ENCODE measurements at regions of chr15 and their contacts with region 1.

Region 1: DNA sequence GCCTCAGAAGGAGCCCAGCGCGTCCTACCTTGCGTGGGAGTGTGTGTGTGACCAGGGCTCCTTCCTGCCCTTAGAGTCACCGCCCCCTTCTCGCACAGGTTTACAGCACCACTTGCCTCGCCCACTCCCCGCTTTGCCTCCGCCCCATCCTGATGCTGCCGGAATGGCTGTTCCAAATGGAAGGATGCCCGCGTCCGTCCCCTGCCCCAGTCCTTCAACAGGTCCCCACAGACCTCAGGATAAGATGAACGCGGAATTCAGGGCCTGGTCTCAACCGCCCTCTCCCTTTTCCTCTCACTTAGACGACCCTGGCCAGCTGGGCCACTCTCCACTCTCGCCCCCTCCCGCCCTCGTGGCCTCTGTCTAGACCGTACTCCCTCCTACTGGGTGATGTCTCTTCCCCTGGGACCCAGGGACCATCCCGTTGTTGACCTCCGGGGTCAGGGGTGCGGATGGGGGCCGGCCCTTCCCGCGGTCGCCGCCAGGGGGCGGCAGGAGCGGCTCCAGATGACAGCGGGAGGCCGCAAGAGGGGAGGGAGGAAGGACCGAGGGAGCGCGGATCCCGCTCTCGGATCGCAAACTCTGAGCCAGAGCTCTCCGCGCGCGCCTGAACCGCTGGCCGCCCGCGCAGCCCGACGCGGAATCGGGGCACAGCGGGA is at the start of gene THSD4:
- DNase-seq: peak; percentile 36 to 92
- H3K4me3 ChIP-seq: peak within 1 kb of the TSS; percentile 21
- CTCF ChIP-seq: peak in 1 of 3 donors; percentile 79
- POLR2A ChIP-seq: no peak
- total RNA-seq, gene THSD4: 9.3 to 39.2 (median 32.8) TPM

Region 2: GRCh38 chr15:70875001-70875782 is 239.8 kb before region 1 on chr15:
- intact Hi-C with region 1: no loop called
- DNase-seq: no peak
- H3K4me3 ChIP-seq: no peak overlapping the region
- CTCF ChIP-seq: no peak
- POLR2A ChIP-seq: no peak

Region 3: GRCh38 chr15:71443538-71443937 is 328.5 kb after region 1 on chr15:
- intact Hi-C with region 1: loop called (anchors 5 kb)
- DNase-seq: peak in 1 of 2 donors; percentile 90
- H3K4me3 ChIP-seq: no peak overlapping the region
- CTCF ChIP-seq: no peak
- POLR2A ChIP-seq: no peak